ENCODE measurements at regions of chr12 and their contacts with region 1.

Region 1: GRCh38 chr12:122336015-122336946 is 70.0 kb upstream of the VPS33A start:
- DNase-seq: peak; percentile 54
- ATAC-seq: peak; percentile 53; the same call in 1 of the 2 replicates
- H3K4me3 Mint-ChIP-seq: no peak overlapping the region
- H3K27ac Mint-ChIP-seq: peak overlapping the region; percentile 73; the same call in 1 of the 2 replicates
- H3K4me1 Mint-ChIP-seq: no peaks in the 10 kb centered on the region
- H3K27me3 Mint-ChIP-seq: no peaks in the 10 kb centered on the region
- CTCF ChIP-seq: peak; percentile 75

Region 2: GRCh38 chr12:122322501-122322900 is 13.8 kb before region 1 on chr12:
- CTCF ChIA-PET with region 1: interaction called, 14 read pairs
- POLR2A ChIA-PET with region 1: no interaction called
- DNase-seq: no peak
- ATAC-seq: no peak
- H3K4me3 Mint-ChIP-seq: no peak overlapping the region
- H3K27ac Mint-ChIP-seq: 0 out of 2 replicates have a peak overlapping the region, but pooled peaks have one; percentile 6
- H3K4me1 Mint-ChIP-seq: peaks cover 4% of the 10 kb centered on the region; the same call in 1 of the 2 replicates
- H3K27me3 Mint-ChIP-seq: no peaks in the 10 kb centered on the region
- CTCF ChIP-seq: no peak

Region 3: DNA sequence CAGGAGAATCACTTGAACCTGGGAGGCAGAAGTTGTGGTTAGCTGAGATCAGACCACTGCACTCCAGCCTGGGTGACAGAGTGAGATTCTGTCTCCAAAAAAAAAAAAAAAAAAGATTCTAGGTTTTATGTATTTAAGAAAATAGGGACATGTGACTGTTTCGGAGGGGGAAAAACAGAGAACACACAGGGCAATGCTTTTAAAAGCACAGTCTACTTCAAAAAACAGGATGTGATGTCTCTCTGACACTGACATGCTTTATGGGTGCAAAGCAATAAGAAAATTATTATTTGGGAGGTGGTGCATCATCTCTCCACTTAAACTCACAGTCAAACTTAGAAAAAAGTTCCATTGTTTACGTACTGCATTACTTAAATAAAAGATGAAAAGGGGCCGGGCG is 57.5 kb after region 1 on chr12:
- CTCF ChIA-PET with region 1: no interaction called
- POLR2A ChIA-PET with region 1: no interaction called
- DNase-seq: no peak
- ATAC-seq: no peak
- H3K4me3 Mint-ChIP-seq: no peak overlapping the region
- H3K27ac Mint-ChIP-seq: no peak overlapping the region
- H3K4me1 Mint-ChIP-seq: no peaks in the 10 kb centered on the region
- H3K27me3 Mint-ChIP-seq: no peaks in the 10 kb centered on the region
- CTCF ChIP-seq: no peak

Region 4: GRCh38 chr12:122471324-122472226 is 135.3 kb after region 1 on chr12:
- CTCF ChIA-PET with region 1: interaction called, 11 read pairs
- POLR2A ChIA-PET with region 1: no interaction called
- DNase-seq: no peak
- ATAC-seq: no peak
- H3K4me3 Mint-ChIP-seq: no peak overlapping the region
- H3K27ac Mint-ChIP-seq: peak overlapping the region; percentile 28; the same call in 1 of the 2 replicates
- H3K4me1 Mint-ChIP-seq: no peaks in the 10 kb centered on the region
- H3K27me3 Mint-ChIP-seq: no peaks in the 10 kb centered on the region
- CTCF ChIP-seq: peak; percentile 46